ENCODE measurements at regions of chr5 and their contacts with region 1.

Region 1: DNA sequence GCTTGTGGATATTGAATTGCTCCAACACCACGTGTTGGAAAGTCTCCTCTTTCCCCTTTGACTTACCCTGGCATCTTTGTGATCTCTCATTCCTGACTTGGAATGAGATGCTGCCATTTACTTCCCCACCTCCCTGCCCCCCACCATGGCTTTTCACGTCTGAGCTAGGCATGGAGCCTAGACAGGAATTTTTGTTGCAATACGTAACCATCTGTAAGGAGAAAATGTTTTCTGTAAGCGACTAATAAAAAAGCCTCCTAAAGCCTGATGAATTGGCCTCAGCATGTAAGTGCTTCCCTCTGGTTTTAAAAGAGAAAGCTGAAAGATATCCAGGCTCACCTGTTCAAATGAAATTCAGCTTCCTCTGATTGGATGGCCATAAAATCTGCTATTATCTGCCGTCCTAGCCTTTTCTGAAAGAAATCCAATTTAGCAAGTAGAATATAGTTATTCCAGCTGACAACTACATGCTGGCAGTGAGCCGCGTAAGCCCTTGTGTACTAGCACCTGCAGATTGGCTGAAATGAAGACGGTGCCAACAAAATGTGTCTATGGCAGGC is 200.1 kb downstream of the NSG2 start:
- DNase-seq: no peak
- CTCF ChIP-seq: no peak

Region 2: DNA sequence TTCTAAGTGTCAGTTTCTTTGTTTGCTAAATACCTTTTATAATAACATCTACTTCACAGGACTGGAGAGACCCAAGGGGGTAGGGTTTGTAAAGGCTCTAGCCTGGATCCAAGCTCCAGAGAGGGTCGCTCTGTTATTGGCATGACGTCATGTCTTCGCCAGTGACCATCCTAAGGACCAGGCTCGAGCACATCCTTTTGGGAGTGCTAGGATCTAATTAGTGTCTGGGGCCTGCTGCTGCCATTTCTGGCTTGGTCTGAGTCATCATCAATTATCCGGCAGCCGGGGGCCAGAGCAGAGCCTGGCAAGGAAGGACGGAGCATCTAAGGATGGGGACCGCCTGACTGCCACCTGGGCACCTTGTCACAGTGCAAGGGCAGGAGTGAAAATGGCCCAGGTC is 47.1 kb before region 1 on chr5:
- CTCF ChIA-PET with region 1: no interaction called
- POLR2A ChIA-PET with region 1: no interaction called
- DNase-seq: no peak
- CTCF ChIP-seq: no peak

Region 3: GRCh38 chr5:174235221-174236011 is 10.2 kb before region 1 on chr5:
- CTCF ChIA-PET with region 1: interaction called, 13 read pairs
- POLR2A ChIA-PET with region 1: no interaction called
- DNase-seq: no peak
- CTCF ChIP-seq: no peak